Sigmoid colon (tissue), 7 donors: ENCODE measurements at regions of chrX and their contacts with region 1.

Region 1: GRCh38 chrX:10615931-10616775 is 4.2 kb downstream of the MID1 start:
- DNase-seq: peak; percentile 72
- H3K4me3 ChIP-seq: peak overlapping the region in 3 of 4 donors; percentile 20 to 68 (median 61)
- H3K27ac ChIP-seq: peak overlapping the region in 3 of 4 donors; percentile 83 to 90 (median 86)
- H3K4me1 ChIP-seq: peaks cover 0 to 51% (median 17%) of the 10 kb centered on the region in 4 donors
- H3K27me3 ChIP-seq: no peaks in the 10 kb centered on the region
- CTCF ChIP-seq: peak; percentile 51 to 57 (median 56)
- EP300 ChIP-seq: no peak
- POLR2A ChIP-seq: no peak

Region 2: GRCh38 chrX:10326578-10326977 is 289.6 kb before region 1 on chrX:
- intact Hi-C with region 1: loop called (anchors 10 kb)
- DNase-seq: no peak
- H3K4me3 ChIP-seq: no peak overlapping the region
- H3K27ac ChIP-seq: no peak overlapping the region
- H3K4me1 ChIP-seq: no peaks in the 10 kb centered on the region
- H3K27me3 ChIP-seq: no peaks in the 10 kb centered on the region
- CTCF ChIP-seq: no peak
- EP300 ChIP-seq: no peak
- POLR2A ChIP-seq: no peak

Region 3: DNA sequence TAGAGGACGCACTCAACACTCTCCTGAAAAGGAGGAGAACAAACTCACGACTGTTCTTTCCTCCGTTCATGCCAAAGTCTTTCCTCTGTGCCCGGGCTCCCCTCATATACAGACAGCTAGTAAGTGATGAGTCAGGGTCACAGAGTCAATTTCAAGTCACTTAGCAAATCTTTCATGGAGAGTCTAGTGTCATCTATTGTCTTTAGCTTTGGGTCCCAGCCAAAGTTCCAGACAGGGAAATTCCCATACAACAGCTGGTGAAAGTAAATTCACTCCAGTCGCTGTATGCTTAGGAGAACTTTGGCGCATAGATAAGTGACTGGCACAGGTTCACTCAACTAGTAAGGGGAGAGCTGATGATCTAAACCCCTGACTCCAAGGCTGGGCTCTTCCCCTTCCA is 222.3 kb before region 1 on chrX:
- intact Hi-C with region 1: loop called (anchors 10 kb)
- DNase-seq: no peak
- H3K4me3 ChIP-seq: no peak overlapping the region
- H3K27ac ChIP-seq: no peak overlapping the region
- H3K4me1 ChIP-seq: peaks cover 0 to 4% (median 1%) of the 10 kb centered on the region in 4 donors
- H3K27me3 ChIP-seq: no peaks in the 10 kb centered on the region
- CTCF ChIP-seq: no peak
- EP300 ChIP-seq: no peak
- POLR2A ChIP-seq: no peak

Region 4: DNA sequence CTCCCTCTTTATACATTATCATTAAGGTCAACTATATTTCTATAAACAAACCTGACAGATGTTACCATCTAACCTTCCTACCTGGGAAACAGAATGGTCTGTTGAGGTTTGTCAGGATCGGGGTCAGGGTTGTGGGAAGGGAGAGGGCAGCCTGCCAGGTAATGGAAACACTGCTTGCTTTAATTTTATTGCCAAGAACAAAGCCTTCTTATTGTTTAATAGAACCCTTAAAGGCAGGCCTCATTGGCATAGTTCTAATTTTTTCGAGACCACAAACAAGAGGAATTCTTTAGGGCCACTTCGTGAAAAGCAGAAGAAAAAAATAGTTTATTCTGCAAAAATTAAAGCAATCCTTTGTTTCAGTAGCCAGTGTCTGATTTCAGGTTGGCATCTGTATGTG is 109.0 kb before region 1 on chrX:
- intact Hi-C with region 1: loop called (anchors 10 kb)
- DNase-seq: no peak
- H3K4me3 ChIP-seq: no peak overlapping the region
- H3K27ac ChIP-seq: peak overlapping the region in 2 of 4 donors; percentile 33 to 47
- H3K4me1 ChIP-seq: peaks cover 0 to 48% (median 19%) of the 10 kb centered on the region in 4 donors
- H3K27me3 ChIP-seq: no peaks in the 10 kb centered on the region
- CTCF ChIP-seq: no peak
- EP300 ChIP-seq: no peak
- POLR2A ChIP-seq: no peak

Region 5: DNA sequence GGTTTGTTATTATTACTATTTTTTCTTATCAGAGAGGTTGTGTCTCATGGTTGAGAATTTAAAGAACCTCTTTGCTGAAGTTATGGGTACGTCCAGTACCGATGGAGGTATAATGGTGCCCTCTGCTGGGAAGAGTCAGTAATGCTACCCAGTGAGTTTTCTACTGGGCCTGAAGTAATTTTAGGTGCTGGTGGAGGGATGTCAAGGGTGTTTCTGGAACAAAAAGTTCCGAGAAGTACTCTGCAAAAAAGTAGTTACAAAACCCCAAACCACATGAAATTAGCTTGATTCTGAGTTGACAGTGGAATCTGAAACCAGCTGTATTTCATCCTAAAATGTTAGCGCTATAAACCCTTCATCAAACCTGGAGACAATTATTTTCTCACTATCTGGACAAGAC is 106.7 kb after region 1 on chrX:
- intact Hi-C with region 1: loop called (anchors 10 kb)
- DNase-seq: peak; percentile 83
- H3K4me3 ChIP-seq: no peak overlapping the region
- H3K27ac ChIP-seq: peak overlapping the region in 2 of 4 donors; percentile 19 to 33
- H3K4me1 ChIP-seq: peaks cover 0 to 19% (median 7%) of the 10 kb centered on the region in 4 donors
- H3K27me3 ChIP-seq: no peaks in the 10 kb centered on the region
- CTCF ChIP-seq: peak; percentile 36 to 58 (median 53)
- EP300 ChIP-seq: no peak
- POLR2A ChIP-seq: no peak

Region 6: DNA sequence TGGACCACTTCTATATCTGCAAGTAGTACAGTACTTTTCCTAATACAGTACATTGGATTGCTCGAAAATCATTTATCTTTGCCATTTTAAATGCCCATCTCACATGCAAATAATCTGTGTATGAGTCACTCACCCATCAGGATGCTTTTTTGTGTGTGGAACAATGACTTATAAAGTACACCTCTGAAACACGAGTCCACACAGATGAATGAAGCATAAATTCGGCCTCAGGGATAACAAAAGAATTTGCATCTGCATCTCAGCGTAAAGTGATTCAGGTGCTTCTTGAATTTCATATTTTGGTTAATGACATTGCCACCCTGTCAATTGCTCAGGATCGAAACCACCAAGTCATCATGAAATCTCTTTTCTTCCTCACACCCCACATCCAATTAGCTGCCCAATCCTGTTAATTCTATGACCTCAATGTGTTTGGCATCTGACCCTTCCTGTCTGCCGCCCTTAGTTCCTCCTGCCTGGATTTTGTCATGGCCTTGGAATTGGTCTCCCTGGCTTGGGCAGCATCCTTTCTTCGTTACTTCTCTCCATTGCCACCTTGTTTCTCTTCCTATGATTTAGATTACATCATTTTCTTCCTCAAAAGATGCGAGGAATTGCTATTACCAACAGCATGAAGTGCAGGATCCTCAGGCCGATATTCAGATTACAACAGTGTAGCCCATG is 165.8 kb after region 1 on chrX:
- intact Hi-C with region 1: no loop called
- DNase-seq: no peak
- H3K4me3 ChIP-seq: no peak overlapping the region
- H3K27ac ChIP-seq: no peak overlapping the region
- H3K4me1 ChIP-seq: no peaks in the 10 kb centered on the region
- H3K27me3 ChIP-seq: no peaks in the 10 kb centered on the region
- CTCF ChIP-seq: no peak
- EP300 ChIP-seq: no peak
- POLR2A ChIP-seq: no peak

Region 7: GRCh38 chrX:10972706-10973105 is 356.6 kb after region 1 on chrX:
- intact Hi-C with region 1: no loop called
- DNase-seq: no peak
- H3K4me3 ChIP-seq: no peak overlapping the region
- H3K27ac ChIP-seq: no peak overlapping the region
- H3K4me1 ChIP-seq: no peaks in the 10 kb centered on the region
- H3K27me3 ChIP-seq: no peaks in the 10 kb centered on the region
- CTCF ChIP-seq: no peak
- EP300 ChIP-seq: no peak
- POLR2A ChIP-seq: no peak